Posterior vena cava (tissue), 2 donors: ENCODE measurements at regions of chr2 and their contacts with region 1.

Region 1: DNA sequence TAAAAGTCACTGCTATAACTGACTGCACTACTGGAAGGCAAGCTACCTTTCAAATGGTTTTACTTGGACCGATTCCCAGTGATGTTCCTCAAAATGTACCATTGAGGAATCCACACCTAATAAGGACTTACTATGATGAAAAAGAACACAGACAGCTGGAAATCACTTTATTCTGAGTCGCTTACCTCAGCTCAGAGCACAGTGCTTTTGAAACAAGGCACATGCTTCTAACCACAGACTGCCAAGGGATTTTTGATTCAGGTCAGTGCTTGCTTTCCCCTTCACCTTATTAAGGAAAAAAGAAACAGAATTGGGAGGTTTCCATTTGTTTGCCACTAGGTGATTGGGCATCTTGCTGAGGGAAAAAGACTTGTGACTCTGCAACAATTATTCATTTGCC is 707.5 kb upstream of the FSHR start:
- DNase-seq: no peak

Region 2: DNA sequence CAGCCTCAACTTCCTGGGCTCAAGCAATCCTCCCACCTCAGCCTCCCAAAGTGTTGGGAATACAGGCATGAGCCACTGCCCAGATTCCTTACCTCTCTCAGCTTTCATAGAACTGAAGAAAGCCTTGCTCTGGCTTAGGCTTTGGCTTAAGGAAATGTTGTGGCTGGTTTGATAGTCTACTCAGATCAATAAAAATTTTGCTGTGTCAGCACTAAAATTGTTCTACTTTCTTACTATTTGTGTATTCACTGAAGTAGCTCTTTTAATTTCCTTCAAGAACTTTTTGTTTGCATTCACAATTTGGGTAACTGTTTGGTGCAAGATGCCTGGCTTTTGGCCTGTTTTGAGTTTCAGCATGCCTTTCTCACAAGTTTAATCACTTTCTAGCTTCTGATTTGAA is 73.5 kb before region 1 on chr2:
- intact Hi-C with region 1: no loop called
- DNase-seq: no peak

Region 3: GRCh38 chr2:49801898-49802450 is 59.8 kb before region 1 on chr2:
- intact Hi-C with region 1: no loop called
- DNase-seq: no peak

Region 4: DNA sequence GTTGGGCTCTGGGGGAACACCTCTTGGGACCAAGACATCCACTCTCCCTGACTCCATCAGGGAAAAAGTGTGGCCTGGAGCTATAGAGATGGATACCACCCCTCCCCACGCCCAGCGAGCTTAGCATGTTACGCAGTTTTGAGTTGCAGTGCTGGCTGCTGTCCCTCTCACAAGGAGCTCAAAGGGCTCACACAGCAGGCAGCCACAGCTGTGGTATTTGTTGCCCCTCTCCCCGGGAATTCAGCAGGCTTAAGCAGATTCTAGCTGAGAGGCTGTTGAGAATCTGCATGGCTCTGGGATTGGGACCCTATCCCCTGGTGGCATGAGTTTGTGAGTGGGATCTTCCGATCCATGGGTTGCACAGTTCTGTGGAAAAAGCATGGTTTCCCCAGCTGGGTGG is 34.5 kb before region 1 on chr2:
- intact Hi-C with region 1: loop called in 1 of 2 experiments (anchors 1 kb)
- DNase-seq: no peak